GM12878 (cell line): ENCODE measurements at regions of chr2 and their contacts with region 1.

Region 1: GRCh38 chr2:68385220-68385906 is 20.3 kb downstream of the PLEK start:
- DNase-seq: peak; percentile 95
- ATAC-seq: peak; percentile 74
- H3K4me3 ChIP-seq: no peak overlapping the region
- H3K27ac ChIP-seq: peak overlapping the region; percentile 90
- H3K4me1 ChIP-seq: peaks cover 88% of the 10 kb centered on the region
- H3K27me3 ChIP-seq: no peaks in the 10 kb centered on the region
- CTCF ChIP-seq: peak in 1 of 3 experiments; percentile 11; a peak in 1 of 6 replicates
- EP300 ChIP-seq: peak; percentile 62 to 81; a peak in 2 of 4 replicates
- POLR2A ChIP-seq: peak; percentile 59
- RAD21 ChIP-seq: no peak

Region 2: GRCh38 chr2:68368654-68369336 is 16.6 kb before region 1 on chr2:
- CTCF ChIA-PET with region 1: interaction called, 8 read pairs
- POLR2A ChIA-PET with region 1: interaction called, 71 read pairs
- RAD21 ChIA-PET with region 1: interaction called, 82 read pairs
- SMC1A ChIA-PET with region 1: interaction called, 126 read pairs
- in situ Hi-C with region 1: no loop called
- intact Hi-C with region 1: no loop called
- DNase-seq: no peak
- ATAC-seq: no peak; the same call in 1 of the 3 replicates
- H3K4me3 ChIP-seq: peak overlapping the region; percentile 84
- H3K27ac ChIP-seq: peak overlapping the region; percentile 94
- H3K4me1 ChIP-seq: peaks cover 18% of the 10 kb centered on the region
- H3K27me3 ChIP-seq: no peaks in the 10 kb centered on the region
- CTCF ChIP-seq: no peak
- EP300 ChIP-seq: no peak
- POLR2A ChIP-seq: no peak; the same call in 1 of the 2 replicates
- RAD21 ChIP-seq: no peak

Region 3: GRCh38 chr2:68411397-68412126 is 26.2 kb after region 1 on chr2:
- CTCF ChIA-PET with region 1: interaction called, 17 read pairs
- POLR2A ChIA-PET with region 1: interaction called, 17 read pairs
- RAD21 ChIA-PET with region 1: interaction called, 32 read pairs
- SMC1A ChIA-PET with region 1: interaction called, 207 read pairs
- in situ Hi-C with region 1: no loop called
- intact Hi-C with region 1: no loop called
- DNase-seq: peak; percentile 84
- ATAC-seq: peak; percentile 95
- H3K4me3 ChIP-seq: peak overlapping the region; percentile 39
- H3K27ac ChIP-seq: peak overlapping the region; percentile 85
- H3K4me1 ChIP-seq: peaks cover 15% of the 10 kb centered on the region
- H3K27me3 ChIP-seq: no peaks in the 10 kb centered on the region; a peak in 1 of 4 replicates
- CTCF ChIP-seq: no peak
- EP300 ChIP-seq: peak in 1 of 2 experiments; percentile 41; a peak in 2 of 4 replicates
- POLR2A ChIP-seq: no peak
- RAD21 ChIP-seq: peak; percentile 22; the same call in 1 of the 2 replicates

Region 4: DNA sequence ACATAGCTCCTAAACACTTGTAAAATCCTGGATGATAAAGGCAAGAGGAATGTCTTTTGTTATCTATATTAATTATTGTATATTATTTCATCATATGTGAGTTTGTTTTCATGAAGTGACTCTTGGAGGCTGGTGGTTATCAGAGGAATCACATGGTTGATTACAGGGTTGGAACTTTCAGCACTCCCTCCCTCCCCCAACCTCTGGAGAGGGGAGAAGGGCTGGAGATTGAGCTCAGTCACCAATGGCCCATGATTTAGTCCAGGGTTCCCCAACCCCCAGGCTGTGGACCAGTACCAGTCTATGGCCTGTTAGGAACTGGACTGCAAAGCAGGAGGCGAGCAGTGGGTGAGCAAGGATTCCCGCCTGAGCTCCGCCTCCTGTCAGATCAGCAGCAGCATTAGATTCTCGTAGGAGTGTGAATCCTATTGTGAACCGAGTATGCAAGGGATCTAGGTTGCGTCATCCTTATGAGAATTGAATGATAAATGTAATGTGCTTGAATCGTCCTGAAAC is 44.0 kb after region 1 on chr2:
- CTCF ChIA-PET with region 1: interaction called, 4 read pairs
- POLR2A ChIA-PET with region 1: interaction called, 40 read pairs
- RAD21 ChIA-PET with region 1: interaction called, 33 read pairs
- SMC1A ChIA-PET with region 1: interaction called, 32 read pairs
- in situ Hi-C with region 1: no loop called
- intact Hi-C with region 1: loop called (anchors 1 kb)
- DNase-seq: no peak
- ATAC-seq: no peak
- H3K4me3 ChIP-seq: no peak overlapping the region
- H3K27ac ChIP-seq: no peak overlapping the region
- H3K4me1 ChIP-seq: peaks cover 42% of the 10 kb centered on the region
- H3K27me3 ChIP-seq: no peaks in the 10 kb centered on the region
- CTCF ChIP-seq: no peak
- EP300 ChIP-seq: no peak
- POLR2A ChIP-seq: no peak
- RAD21 ChIP-seq: no peak

Region 5: DNA sequence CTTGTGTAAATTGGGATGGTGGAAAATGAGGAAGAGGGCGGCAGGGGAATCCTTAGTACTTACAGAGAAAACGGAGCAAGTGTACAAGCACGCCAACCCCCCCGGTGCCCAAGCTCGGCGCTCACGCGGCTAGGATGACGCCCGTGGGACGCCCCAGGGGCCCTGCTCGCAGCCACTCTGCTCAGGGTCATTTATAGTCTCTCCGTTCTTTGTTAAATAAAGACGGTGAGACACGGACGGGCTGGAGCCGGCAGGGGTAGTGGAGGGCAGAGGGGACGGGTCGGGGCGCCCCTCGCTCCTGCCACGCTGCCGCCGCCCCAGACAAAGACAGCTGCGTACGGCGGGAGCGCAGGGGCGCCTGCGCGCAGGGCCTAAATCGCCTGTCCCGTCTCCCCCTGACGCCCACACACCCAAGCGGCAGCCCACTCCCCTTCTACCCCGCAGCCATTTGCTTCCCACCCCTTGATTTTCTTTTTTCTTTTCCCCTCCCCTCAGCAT is 1739.7 kb after region 1 on chr2:
- CTCF ChIA-PET with region 1: no interaction called
- POLR2A ChIA-PET with region 1: no interaction called
- RAD21 ChIA-PET with region 1: no interaction called
- SMC1A ChIA-PET with region 1: no interaction called
- in situ Hi-C with region 1: loop called (anchors 25 kb)
- intact Hi-C with region 1: no loop called
- DNase-seq: no peak
- ATAC-seq: peak; percentile 61
- H3K4me3 ChIP-seq: peak overlapping the region; percentile 67
- H3K27ac ChIP-seq: peak overlapping the region; percentile 95
- H3K4me1 ChIP-seq: peaks cover 62% of the 10 kb centered on the region
- H3K27me3 ChIP-seq: no peaks in the 10 kb centered on the region
- CTCF ChIP-seq: no peak
- EP300 ChIP-seq: no peak; a peak in 1 of 4 replicates
- POLR2A ChIP-seq: peak; percentile 88
- RAD21 ChIP-seq: no peak